ENCODE measurements at regions of chr2 and their contacts with region 1.

Region 1: GRCh38 chr2:85888684-85889626 is at the start of gene ST3GAL5:
- DNase-seq: peak; percentile 63 to 85
- H3K4me3 ChIP-seq: peak within 1 kb of the TSS; percentile 88
- H3K27ac ChIP-seq: peak within 1 kb of the TSS; percentile 48
- H3K4me1 ChIP-seq: peaks cover 50% of the 10 kb centered on the region
- H3K27me3 ChIP-seq: no peaks in the 10 kb centered on the region
- CTCF ChIP-seq: peak; percentile 86
- total RNA-seq, gene ST3GAL5: 5.9 and 7.2 TPM in 2 replicates

Region 2: GRCh38 chr2:85694052-85695025 is 194.6 kb before region 1 on chr2 and contains the start of gene GNLY:
- CTCF ChIA-PET with region 1: interaction called, 15 read pairs
- POLR2A ChIA-PET with region 1: no interaction called
- intact Hi-C with region 1: no loop called
- DNase-seq: no peak
- H3K4me3 ChIP-seq: no peak within 1 kb of the TSS
- H3K27ac ChIP-seq: no peak within 1 kb of the TSS
- H3K4me1 ChIP-seq: peaks cover 9% of the 10 kb centered on the region; the same call in 1 of the 2 replicates
- H3K27me3 ChIP-seq: no peaks in the 10 kb centered on the region
- CTCF ChIP-seq: no peak
- total RNA-seq, gene GNLY: not detected in 2 replicates

Region 3: DNA sequence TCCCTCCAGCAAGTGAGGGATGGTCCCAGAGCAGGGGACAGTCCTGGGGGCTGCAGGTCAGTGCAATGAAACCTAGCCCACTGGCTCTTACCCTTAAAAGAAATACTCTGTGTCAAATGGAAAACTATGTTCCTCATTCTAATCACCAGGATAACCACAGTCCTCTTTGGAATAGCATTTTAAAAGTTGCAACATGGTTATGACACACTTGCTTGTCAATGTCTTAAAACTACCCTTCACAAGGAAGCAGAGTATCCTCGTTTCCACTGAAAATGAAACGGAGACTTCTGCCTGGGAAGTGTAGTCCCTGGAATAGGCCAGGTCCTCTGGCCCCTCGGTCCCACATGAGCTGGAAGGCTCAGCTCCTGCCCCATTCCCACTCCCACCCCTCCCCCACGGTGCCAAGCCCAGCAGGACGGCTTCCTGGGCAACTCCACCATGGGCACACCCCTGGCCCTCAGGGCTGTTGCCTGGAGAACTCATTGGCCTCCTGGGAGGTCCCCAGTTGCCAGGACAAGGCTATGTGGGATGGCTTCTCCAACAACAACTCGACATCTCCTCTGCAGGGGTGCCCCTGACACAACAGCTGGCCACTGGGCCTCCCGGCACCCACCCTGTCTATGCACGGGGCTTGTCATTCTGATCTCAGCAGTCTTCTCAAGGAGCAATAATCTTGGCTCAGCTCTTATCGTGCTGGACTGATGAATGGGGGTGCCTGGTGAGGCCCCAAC is 38.1 kb after region 1 on chr2:
- CTCF ChIA-PET with region 1: no interaction called
- POLR2A ChIA-PET with region 1: no interaction called
- intact Hi-C with region 1: loop called (anchors 2 kb)
- DNase-seq: peak; percentile 17 to 68
- H3K4me3 ChIP-seq: peak overlapping the region; percentile 33; the same call in 1 of the 2 replicates
- H3K27ac ChIP-seq: peak overlapping the region; percentile 84
- H3K4me1 ChIP-seq: peaks cover 82% of the 10 kb centered on the region
- H3K27me3 ChIP-seq: no peaks in the 10 kb centered on the region
- CTCF ChIP-seq: no peak

Region 4: GRCh38 chr2:86017901-86018896 is 129.2 kb after region 1 on chr2:
- CTCF ChIA-PET with region 1: no interaction called
- POLR2A ChIA-PET with region 1: no interaction called
- intact Hi-C with region 1: loop called (anchors 2 kb)
- DNase-seq: peak; percentile 66 to 74
- H3K4me3 ChIP-seq: no peak overlapping the region
- H3K27ac ChIP-seq: no peak overlapping the region
- H3K4me1 ChIP-seq: peaks cover 18% of the 10 kb centered on the region
- H3K27me3 ChIP-seq: no peaks in the 10 kb centered on the region
- CTCF ChIP-seq: no peak

Region 5: DNA sequence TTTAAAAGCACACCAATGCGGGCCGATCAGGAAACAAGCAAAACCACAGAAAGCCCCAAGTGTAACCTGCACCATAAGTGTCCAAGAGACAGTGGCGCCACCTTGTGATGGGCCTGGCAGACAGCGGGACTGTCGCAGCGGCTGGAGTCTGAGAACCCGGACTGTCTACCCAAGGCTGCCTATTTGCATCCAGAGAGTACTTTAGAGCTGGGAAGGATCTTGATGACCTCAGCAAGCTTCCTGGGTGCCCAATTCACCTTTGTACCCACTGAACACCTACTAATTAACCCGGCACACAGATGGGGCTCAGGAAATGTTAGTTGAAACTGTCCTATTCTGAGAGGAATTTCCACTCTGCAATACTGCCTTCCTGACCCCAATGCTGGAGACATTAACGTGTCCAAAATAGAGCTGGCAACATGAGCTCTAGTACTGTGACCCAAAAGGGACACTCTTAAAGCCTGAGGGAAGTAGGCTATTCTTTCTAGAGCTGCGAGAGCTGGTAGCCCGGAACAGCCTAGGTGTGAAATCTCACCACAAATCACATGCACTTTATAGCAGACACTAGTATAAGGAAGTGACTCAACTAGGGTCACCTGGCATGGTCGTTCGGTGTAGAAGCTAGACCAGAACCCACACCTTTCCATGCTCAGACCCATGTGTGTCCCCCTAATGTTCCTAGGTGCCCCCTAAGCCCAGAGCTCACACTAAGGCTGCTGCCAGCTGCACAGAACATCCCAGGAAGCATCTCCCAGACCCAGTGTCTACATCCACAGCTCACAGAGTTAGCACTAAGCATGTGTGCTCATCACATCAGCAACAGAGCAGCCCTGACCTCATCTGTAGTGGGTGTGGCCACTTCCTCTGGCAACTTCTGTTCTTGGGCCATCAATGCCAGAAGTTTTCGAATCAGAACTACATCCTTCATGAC is 191.3 kb after region 1 on chr2:
- CTCF ChIA-PET with region 1: interaction called, 4 read pairs
- POLR2A ChIA-PET with region 1: no interaction called
- intact Hi-C with region 1: loop called (anchors 1 kb)
- DNase-seq: peak in 1 of 2 experiments; percentile 62
- H3K4me3 ChIP-seq: no peak overlapping the region
- H3K27ac ChIP-seq: no peak overlapping the region
- H3K4me1 ChIP-seq: no peaks in the 10 kb centered on the region
- H3K27me3 ChIP-seq: no peaks in the 10 kb centered on the region
- CTCF ChIP-seq: peak; percentile 76

Measured in PC-9 (cell line).